SK-N-SH (cell line): ENCODE measurements at regions of chr19 and their contacts with region 1.

Region 1: DNA sequence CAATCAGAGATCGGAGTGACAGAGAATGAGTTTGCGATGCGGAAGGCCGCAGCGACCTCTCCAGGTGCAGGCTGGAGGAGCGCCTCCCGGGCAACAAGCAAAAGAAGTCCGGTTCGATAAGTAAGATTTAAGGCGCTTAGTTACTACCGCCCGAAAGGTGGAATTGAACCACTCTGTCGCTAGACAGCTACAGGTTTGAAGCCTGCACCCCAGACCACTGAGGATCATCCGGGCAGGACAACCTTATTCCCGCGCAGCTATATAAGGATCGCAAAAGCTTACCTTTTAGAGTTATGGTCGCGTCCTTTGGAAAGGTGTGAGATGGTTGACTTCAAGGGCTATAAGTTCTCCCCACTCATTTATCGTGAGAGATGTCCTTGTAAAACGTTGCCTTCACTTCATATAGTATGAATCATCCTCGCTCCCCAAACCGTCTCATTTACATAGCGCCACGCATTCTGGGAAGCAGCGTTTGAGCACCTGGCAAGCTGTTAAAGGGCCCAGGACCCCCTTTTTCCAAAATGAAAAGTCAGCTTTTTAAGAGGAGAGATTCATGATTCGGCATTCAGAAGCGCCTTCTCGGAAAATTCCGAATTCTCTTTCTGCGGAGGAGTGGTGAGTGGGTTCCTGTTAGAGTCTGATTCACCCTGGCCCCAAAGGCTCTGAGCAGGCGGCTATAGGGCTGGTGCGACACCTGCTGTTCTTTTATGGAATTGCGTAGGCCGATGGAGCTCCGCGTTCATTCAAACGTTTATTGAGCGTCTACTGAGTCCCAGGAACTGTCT is 10.8 kb downstream of the FOSB start:
- DNase-seq: peak; percentile 73
- H3K4me3 ChIP-seq: peak overlapping the region; percentile 53 to 72
- H3K27ac ChIP-seq: peak overlapping the region; percentile 92 to 95
- H3K4me1 ChIP-seq: peaks cover 0 to 5% of the 10 kb centered on the region in 2 experiments; a peak in 2 of 4 replicates
- H3K27me3 ChIP-seq: no peaks in the 10 kb centered on the region
- CTCF ChIP-seq: peak; percentile 95
- EP300 ChIP-seq: peak in 1 of 2 experiments; percentile 36; a peak in 1 of 4 replicates
- RAD21 ChIP-seq: peak; percentile 93

Region 2: GRCh38 chr19:45405435-45406225 is 73.0 kb before region 1 on chr19:
- CTCF ChIA-PET with region 1: interaction called, 19 read pairs
- POLR2A ChIA-PET with region 1: no interaction called
- DNase-seq: peak; percentile 93
- H3K4me3 ChIP-seq: peak overlapping the region; percentile 87 to 97
- H3K27ac ChIP-seq: peak overlapping the region; percentile 96 to 98
- H3K4me1 ChIP-seq: peaks cover 16 to 26% of the 10 kb centered on the region in 2 experiments; a peak in 3 of 4 replicates
- H3K27me3 ChIP-seq: no peaks in the 10 kb centered on the region
- CTCF ChIP-seq: no peak
- EP300 ChIP-seq: no peak
- RAD21 ChIP-seq: no peak

Region 3: GRCh38 chr19:45413497-45413896 is 65.1 kb before region 1 on chr19:
- CTCF ChIA-PET with region 1: interaction called, 10 read pairs
- POLR2A ChIA-PET with region 1: no interaction called
- DNase-seq: no peak
- H3K4me3 ChIP-seq: no peak overlapping the region
- H3K27ac ChIP-seq: no peak overlapping the region
- H3K4me1 ChIP-seq: no peaks in the 10 kb centered on the region
- H3K27me3 ChIP-seq: no peaks in the 10 kb centered on the region
- CTCF ChIP-seq: no peak
- EP300 ChIP-seq: no peak
- RAD21 ChIP-seq: no peak

Region 4: GRCh38 chr19:45423589-45424190 is 55.0 kb before region 1 on chr19 and contains the start of gene ERCC1:
- CTCF ChIA-PET with region 1: interaction called, 73 read pairs
- POLR2A ChIA-PET with region 1: interaction called, 5 read pairs
- DNase-seq: peak; percentile 98
- H3K4me3 ChIP-seq: peak within 1 kb of the TSS; percentile 67 to 85
- H3K27ac ChIP-seq: peak within 1 kb of the TSS; percentile 92 to 100
- H3K4me1 ChIP-seq: peaks cover 15 to 20% of the 10 kb centered on the region in 2 experiments
- H3K27me3 ChIP-seq: no peaks in the 10 kb centered on the region
- CTCF ChIP-seq: no peak
- EP300 ChIP-seq: peak; percentile 21 to 28; a peak in 1 of 4 replicates
- RAD21 ChIP-seq: no peak
- polyA plus RNA-seq, gene ERCC1: 93.1 and 95.3 TPM in 2 replicates

Region 5: GRCh38 chr19:45455707-45456499 is 22.7 kb before region 1 on chr19:
- CTCF ChIA-PET with region 1: interaction called, 13 read pairs
- POLR2A ChIA-PET with region 1: no interaction called
- DNase-seq: peak; percentile 71
- H3K4me3 ChIP-seq: peak overlapping the region in 1 of 2 experiments; percentile 24; a peak in 1 of 4 replicates
- H3K27ac ChIP-seq: peak overlapping the region; percentile 6 to 95; a peak in 3 of 4 replicates
- H3K4me1 ChIP-seq: peaks cover 12 to 17% of the 10 kb centered on the region in 2 experiments; a peak in 2 of 4 replicates
- H3K27me3 ChIP-seq: no peaks in the 10 kb centered on the region
- CTCF ChIP-seq: no peak
- EP300 ChIP-seq: peak in 1 of 2 experiments; percentile 88; a peak in 1 of 4 replicates
- RAD21 ChIP-seq: no peak

Region 6: GRCh38 chr19:45496349-45496953 is 17.8 kb after region 1 on chr19:
- CTCF ChIA-PET with region 1: interaction called, 61 read pairs
- POLR2A ChIA-PET with region 1: no interaction called
- DNase-seq: peak; percentile 80
- H3K4me3 ChIP-seq: peak overlapping the region; percentile 79 to 83
- H3K27ac ChIP-seq: peak overlapping the region in 1 of 2 experiments; percentile 73; a peak in 2 of 4 replicates
- H3K4me1 ChIP-seq: peaks cover 3 to 16% of the 10 kb centered on the region in 2 experiments; a peak in 2 of 4 replicates
- H3K27me3 ChIP-seq: no peaks in the 10 kb centered on the region
- CTCF ChIP-seq: no peak
- EP300 ChIP-seq: no peak
- RAD21 ChIP-seq: no peak

Region 7: DNA sequence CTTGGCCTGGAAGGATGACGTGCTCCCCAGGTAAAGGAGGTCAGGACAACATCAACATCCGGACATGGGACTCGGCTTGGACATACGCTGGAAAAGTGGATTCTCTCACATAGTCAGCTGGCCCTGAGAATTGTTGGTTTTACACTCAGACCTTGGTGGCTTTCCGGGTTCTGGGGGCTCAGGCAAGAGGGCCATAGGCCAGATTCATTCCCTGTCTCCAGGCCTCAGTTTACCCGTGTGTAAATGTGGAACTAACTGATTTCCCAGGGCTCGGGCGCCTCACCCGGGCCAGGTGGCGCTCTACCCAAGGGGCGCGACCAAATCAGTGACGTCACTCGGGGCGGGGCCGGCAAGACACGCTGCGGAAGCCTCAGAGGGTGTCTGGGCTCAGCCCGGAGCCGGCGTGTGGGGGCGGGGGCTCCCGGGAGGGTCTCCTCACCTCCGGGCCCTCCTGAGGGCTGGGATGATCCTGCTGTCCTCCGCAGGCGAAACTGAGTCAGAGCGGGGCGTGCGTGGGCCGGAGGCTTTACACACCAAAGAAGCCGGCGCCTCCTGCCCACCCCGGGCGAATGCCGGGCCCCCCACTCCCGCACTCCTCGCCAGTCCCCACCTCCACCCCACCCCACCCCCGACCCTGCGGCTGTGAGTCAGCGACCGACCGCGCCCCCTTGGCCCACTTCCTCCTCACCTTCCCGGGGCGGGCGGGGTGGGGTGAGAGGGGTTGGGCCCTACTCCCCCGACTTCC is 27.8 kb after region 1 on chr19:
- CTCF ChIA-PET with region 1: interaction called, 10 read pairs
- POLR2A ChIA-PET with region 1: no interaction called
- DNase-seq: peak; percentile 94
- H3K4me3 ChIP-seq: peak overlapping the region; percentile 74 to 98
- H3K27ac ChIP-seq: peak overlapping the region; percentile 88 to 91
- H3K4me1 ChIP-seq: peaks cover 6 to 12% of the 10 kb centered on the region in 2 experiments; a peak in 2 of 4 replicates
- H3K27me3 ChIP-seq: no peaks in the 10 kb centered on the region
- CTCF ChIP-seq: peak; percentile 63
- EP300 ChIP-seq: peak; percentile 4 to 29; a peak in 1 of 4 replicates
- RAD21 ChIP-seq: peak; percentile 53

Region 8: GRCh38 chr19:45526143-45526542 is 47.5 kb after region 1 on chr19:
- CTCF ChIA-PET with region 1: no interaction called
- POLR2A ChIA-PET with region 1: no interaction called
- DNase-seq: peak; percentile 91
- H3K4me3 ChIP-seq: no peak overlapping the region
- H3K27ac ChIP-seq: no peak overlapping the region
- H3K4me1 ChIP-seq: no peaks in the 10 kb centered on the region; a peak in 1 of 4 replicates
- H3K27me3 ChIP-seq: no peaks in the 10 kb centered on the region
- CTCF ChIP-seq: no peak
- EP300 ChIP-seq: no peak
- RAD21 ChIP-seq: no peak